HEK293 (cell line): ENCODE measurements at regions of chr12 and their contacts with region 1.

Region 1: DNA sequence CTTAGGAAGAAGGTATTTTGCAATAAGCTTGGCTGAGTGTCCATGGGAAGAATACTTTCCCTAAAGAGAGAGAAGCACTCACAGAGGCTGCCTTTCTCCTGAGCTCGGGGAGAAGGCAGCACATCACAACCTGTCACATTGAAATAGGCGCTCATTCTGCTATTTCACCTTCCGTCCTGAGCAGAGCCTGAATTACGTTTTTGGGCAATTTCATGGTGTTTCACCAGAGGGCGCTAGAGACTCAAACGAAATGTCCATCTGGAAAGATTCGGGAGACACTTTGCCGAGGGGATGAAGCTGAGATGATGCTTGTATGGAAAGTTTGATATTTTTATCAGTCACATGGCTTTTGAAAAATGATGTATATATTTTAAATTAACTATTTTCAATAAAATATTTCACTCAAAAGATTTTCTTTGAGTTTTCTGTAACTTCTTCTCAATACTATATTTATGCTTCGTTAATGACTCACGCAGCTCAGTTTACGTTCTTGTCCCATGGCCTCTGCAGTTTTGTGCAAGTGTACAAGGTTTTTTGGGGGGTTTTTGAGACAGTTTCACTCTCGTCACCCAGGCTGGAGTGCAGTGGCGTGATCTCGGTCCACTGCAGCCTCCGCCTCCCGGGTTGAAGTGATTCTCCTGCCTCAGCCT is 17.4 kb upstream of the B4GALNT3 start:
- H3K4me3 ChIP-seq: no peak overlapping the region
- H3K27ac ChIP-seq: no peak overlapping the region
- H3K4me1 ChIP-seq: no peaks in the 10 kb centered on the region
- CTCF ChIP-seq: peak; percentile 65

Region 2: DNA sequence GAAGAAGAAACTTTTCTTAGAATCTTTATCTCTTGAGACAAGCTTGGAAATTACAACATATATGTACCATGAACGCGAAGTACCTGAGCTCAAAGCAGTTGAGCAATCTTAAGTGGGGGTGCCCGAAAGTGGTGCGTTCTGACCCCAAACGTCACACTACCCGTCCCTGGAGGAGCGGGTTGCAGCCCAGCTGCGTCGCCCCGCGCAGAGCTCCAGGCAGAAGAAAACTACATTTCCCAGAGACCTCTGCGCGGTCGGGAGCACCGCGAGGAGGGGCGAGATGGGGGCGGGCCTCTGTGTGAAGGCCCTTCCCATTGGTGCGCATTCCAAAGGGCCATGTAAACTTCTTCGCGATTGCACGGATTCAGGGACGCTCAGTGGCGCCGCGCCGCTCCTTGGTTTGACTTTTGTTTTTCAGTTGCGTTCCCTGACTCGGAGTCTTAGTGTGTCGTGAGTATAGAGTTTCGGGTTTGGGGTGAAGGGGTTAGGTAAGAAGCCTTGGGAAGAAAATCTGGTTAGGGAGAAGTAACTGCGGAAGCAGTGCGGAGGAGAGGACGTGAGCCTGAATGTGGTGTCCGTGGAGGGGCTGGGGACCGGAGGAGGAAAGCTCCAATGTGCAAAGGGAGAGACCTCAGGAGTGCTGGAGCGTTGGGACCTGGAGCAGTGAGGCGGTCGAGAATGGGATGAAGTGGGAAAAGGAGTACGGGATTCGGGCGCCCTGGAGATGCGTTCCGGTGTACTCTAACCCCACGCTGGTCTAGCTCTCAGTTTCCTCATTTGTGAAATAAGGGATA is 40.9 kb before region 1 on chr12 and contains the start of gene CCDC77:
- CTCF ChIA-PET with region 1: interaction called, 17 read pairs
- POLR2A ChIA-PET with region 1: no interaction called
- H3K4me3 ChIP-seq: peak within 1 kb of the TSS; percentile 59
- H3K27ac ChIP-seq: peak within 1 kb of the TSS; percentile 28
- H3K4me1 ChIP-seq: no peaks in the 10 kb centered on the region; the same call in 1 of the 2 replicates
- CTCF ChIP-seq: peak; percentile 89

Region 3: GRCh38 chr12:460301-461230 is 18.2 kb after region 1 on chr12:
- CTCF ChIA-PET with region 1: interaction called, 47 read pairs
- POLR2A ChIA-PET with region 1: no interaction called
- H3K4me3 ChIP-seq: peak overlapping the region; percentile 60
- H3K27ac ChIP-seq: peak overlapping the region; percentile 51; the same call in 1 of the 2 replicates
- H3K4me1 ChIP-seq: peaks cover 9% of the 10 kb centered on the region
- CTCF ChIP-seq: no peak

Region 4: GRCh38 chr12:530308-530707 is 87.9 kb after region 1 on chr12:
- CTCF ChIA-PET with region 1: interaction called, 18 read pairs
- POLR2A ChIA-PET with region 1: no interaction called
- H3K4me3 ChIP-seq: no peak overlapping the region
- H3K27ac ChIP-seq: no peak overlapping the region
- H3K4me1 ChIP-seq: no peaks in the 10 kb centered on the region
- CTCF ChIP-seq: no peak

Region 5: GRCh38 chr12:546921-547845 is 104.8 kb after region 1 on chr12:
- CTCF ChIA-PET with region 1: interaction called, 119 read pairs
- POLR2A ChIA-PET with region 1: interaction called, 5 read pairs
- H3K4me3 ChIP-seq: no peak overlapping the region
- H3K27ac ChIP-seq: no peak overlapping the region
- H3K4me1 ChIP-seq: no peaks in the 10 kb centered on the region
- CTCF ChIP-seq: peak; percentile 97